ENCODE measurements at regions of chr2 and their contacts with region 1.

Region 1: GRCh38 chr2:37837628-37838328 is 87.3 kb upstream of the RMDN2 start:
- DNase-seq: peak; percentile 96
- H3K4me3 ChIP-seq: no peak overlapping the region
- H3K27ac ChIP-seq: peak overlapping the region; percentile 59 to 85 (median 72)
- H3K4me1 ChIP-seq: peaks cover 0 to 28% (median 17%) of the 10 kb centered on the region in 4 donors
- H3K27me3 ChIP-seq: no peaks in the 10 kb centered on the region
- CTCF ChIP-seq: no peak
- EP300 ChIP-seq: peak; percentile 92 to 99 (median 96)
- POLR2A ChIP-seq: no peak

Region 2: GRCh38 chr2:36355151-36355889 is 1482.5 kb before region 1 on chr2 and contains the start of gene CRIM1:
- intact Hi-C with region 1: no loop called
- DNase-seq: peak; percentile 96
- H3K4me3 ChIP-seq: peak within 1 kb of the TSS; percentile 81 to 91 (median 87)
- H3K27ac ChIP-seq: peak within 1 kb of the TSS; percentile 87 to 96 (median 92)
- H3K4me1 ChIP-seq: peaks cover 0 to 61% (median 26%) of the 10 kb centered on the region in 4 donors
- H3K27me3 ChIP-seq: no peaks in the 10 kb centered on the region
- CTCF ChIP-seq: no peak
- EP300 ChIP-seq: no peak
- POLR2A ChIP-seq: peak in 1 of 2 donors; percentile 35
- total RNA-seq, gene CRIM1: 55.6 to 148 (median 64.2) TPM

Region 3: DNA sequence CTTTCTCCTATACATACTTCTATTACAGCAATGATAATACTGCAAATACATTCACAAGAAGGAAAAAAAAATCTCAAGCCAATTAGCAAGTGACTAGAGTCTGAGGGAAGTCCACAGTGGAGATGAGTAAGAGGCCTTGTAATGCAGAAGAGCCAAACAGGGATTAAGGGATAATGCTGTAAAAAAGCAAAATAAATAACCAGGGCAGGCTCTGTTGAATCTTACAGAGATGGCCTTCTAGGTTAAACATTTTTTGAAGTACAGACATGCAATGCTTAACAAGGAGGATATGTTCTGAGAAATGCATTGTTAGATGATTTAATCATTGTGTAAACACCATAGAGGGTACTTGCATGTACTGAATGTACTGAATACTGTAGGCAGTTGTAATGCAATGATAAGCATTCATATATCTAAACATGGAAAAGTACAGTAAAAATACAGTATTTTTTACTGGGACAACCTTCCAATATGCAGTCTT is 34.8 kb before region 1 on chr2:
- intact Hi-C with region 1: no loop called
- DNase-seq: no peak
- H3K4me3 ChIP-seq: no peak overlapping the region
- H3K27ac ChIP-seq: peak overlapping the region; percentile 42 to 78 (median 68)
- H3K4me1 ChIP-seq: peaks cover 0 to 34% (median 27%) of the 10 kb centered on the region in 4 donors
- H3K27me3 ChIP-seq: no peaks in the 10 kb centered on the region
- CTCF ChIP-seq: no peak
- EP300 ChIP-seq: no peak
- POLR2A ChIP-seq: no peak

Region 4: DNA sequence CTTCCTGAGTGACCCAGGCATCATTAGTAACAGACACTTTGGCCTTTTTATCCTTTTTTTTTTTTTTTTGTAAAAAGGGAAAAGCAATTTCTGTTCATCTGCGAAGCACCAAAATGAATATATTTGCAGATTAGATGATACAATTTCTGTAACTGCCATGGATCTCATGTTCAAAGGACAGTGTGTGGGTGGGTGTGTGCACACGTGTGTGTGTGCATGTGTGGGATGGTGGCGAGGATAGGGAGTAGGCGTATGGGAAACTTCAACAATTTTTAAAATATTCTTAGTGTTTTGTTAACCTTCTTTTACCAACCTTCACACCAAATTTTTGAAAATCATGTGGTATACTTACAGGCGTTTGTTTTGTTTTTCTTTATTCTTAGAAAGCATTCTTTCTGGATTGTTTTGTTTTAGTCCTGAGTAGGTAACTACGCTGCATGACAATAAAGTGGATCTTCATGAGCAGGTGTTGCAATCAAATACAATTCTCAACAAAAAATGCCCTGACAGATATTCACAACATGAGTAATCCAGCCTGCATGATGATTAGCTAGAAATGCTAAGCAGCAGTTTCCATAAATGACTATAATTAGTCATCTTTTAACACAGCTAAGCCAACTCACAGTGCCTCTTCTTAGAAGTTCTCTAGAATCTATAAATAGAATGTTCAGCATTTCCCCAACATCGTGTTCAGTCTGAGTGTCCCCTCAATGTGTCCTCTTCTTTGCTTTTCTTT is 33.8 kb after region 1 on chr2:
- intact Hi-C with region 1: loop called (anchors 2 kb)
- DNase-seq: no peak
- H3K4me3 ChIP-seq: no peak overlapping the region
- H3K27ac ChIP-seq: peak overlapping the region; percentile 78 to 88 (median 84)
- H3K4me1 ChIP-seq: peaks cover 0 to 67% (median 53%) of the 10 kb centered on the region in 4 donors
- H3K27me3 ChIP-seq: no peaks in the 10 kb centered on the region
- CTCF ChIP-seq: no peak
- EP300 ChIP-seq: peak in 2 of 4 donors; percentile 15
- POLR2A ChIP-seq: no peak

Measured in sigmoid colon (tissue), 7 donors.